K562 (cell line): ENCODE measurements at regions of chr11 and their contacts with region 1.

Region 1: DNA sequence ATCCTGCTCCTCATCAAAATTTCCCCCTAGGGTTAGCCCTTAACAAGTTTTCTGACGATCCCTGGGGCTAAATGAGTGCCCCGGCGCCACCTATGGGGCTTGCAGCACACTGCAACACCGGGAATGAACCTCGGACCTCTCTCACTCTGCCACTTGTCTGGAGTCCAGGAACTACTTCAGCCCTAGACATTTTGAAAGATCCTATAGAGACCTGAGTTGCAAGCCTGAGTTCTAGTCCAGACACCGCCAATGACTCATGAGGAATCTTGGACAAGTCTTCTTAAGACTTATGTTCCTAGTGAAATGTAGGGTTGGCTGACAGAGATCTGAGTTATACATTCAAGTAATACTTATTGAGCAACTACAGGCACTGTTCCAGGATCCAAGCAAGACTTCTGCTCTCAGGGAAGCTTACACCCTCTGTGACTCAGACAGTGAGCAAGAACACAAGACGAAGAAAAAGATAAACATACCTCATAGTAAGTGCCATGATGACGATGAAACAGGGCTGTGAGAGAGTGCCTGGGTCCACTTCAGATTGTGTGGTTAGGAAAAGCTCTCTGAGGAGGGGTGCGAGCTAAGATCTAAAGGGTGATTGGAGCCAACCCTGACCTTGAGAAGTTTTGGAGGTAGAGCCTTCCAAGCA is 10.2 kb upstream of the STK33 start:
- DNase-seq: peak; percentile 60 to 70 (median 68)
- ATAC-seq: peak; percentile 97
- H3K4me3 ChIP-seq: no peak overlapping the region
- H3K27ac ChIP-seq: no peak overlapping the region
- H3K4me1 ChIP-seq: peaks cover 0 to 3% of the 10 kb centered on the region in 2 experiments; a peak in 1 of 5 replicates
- H3K27me3 ChIP-seq: peaks cover 6 to 14% of the 10 kb centered on the region in 2 experiments
- CTCF ChIP-seq: peak; percentile 76 to 90 (median 81)
- EP300 ChIP-seq: no peak
- POLR2A ChIP-seq: no peak
- RAD21 ChIP-seq: peak; percentile 20 to 49; a peak in 3 of 4 replicates

Region 2: GRCh38 chr11:7281809-7282208 is 1322.4 kb before region 1 on chr11:
- CTCF ChIA-PET with region 1: no interaction called
- POLR2A ChIA-PET with region 1: no interaction called
- in situ Hi-C with region 1: no loop called
- intact Hi-C with region 1: no loop called
- DNase-seq: no peak
- ATAC-seq: no peak
- H3K4me3 ChIP-seq: no peak overlapping the region
- H3K27ac ChIP-seq: no peak overlapping the region
- H3K4me1 ChIP-seq: no peaks in the 10 kb centered on the region
- H3K27me3 ChIP-seq: no peaks in the 10 kb centered on the region
- CTCF ChIP-seq: no peak
- EP300 ChIP-seq: no peak
- POLR2A ChIP-seq: no peak
- RAD21 ChIP-seq: no peak

Region 3: DNA sequence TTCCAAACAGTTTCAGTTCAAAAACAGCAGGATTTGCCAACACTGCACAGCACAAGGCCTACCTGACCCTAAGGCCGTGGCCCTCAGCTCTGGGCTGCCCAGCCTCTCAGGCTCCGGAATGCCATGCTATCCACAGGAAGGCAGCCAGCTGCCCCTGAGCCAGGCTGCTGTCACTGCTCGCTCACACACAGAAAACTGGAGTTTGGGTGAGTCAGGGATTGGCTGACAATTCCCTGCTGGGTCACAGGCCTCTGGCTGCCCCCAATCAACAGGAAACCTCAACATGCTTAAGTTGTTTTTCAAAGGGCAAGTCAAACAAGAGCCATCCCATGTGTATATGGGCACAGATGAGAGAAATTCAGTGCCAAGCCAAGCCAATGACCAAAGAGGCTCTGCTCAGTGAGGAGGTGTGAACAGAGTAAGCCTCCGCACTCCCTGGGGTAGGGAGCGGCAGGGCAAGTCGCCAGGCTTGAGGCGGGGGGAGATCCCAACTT is 128.6 kb after region 1 on chr11:
- CTCF ChIA-PET with region 1: interaction called, 3 read pairs
- POLR2A ChIA-PET with region 1: no interaction called
- in situ Hi-C with region 1: no loop called
- intact Hi-C with region 1: loop called (anchors 10 kb)
- DNase-seq: no peak
- ATAC-seq: no peak
- H3K4me3 ChIP-seq: no peak overlapping the region
- H3K27ac ChIP-seq: no peak overlapping the region
- H3K4me1 ChIP-seq: peaks cover 7 to 10% of the 10 kb centered on the region in 2 experiments; a peak in 4 of 5 replicates
- H3K27me3 ChIP-seq: peaks cover 6 to 28% of the 10 kb centered on the region in 2 experiments; a peak in 4 of 5 replicates
- CTCF ChIP-seq: no peak
- EP300 ChIP-seq: no peak
- POLR2A ChIP-seq: no peak
- RAD21 ChIP-seq: no peak

Region 4: DNA sequence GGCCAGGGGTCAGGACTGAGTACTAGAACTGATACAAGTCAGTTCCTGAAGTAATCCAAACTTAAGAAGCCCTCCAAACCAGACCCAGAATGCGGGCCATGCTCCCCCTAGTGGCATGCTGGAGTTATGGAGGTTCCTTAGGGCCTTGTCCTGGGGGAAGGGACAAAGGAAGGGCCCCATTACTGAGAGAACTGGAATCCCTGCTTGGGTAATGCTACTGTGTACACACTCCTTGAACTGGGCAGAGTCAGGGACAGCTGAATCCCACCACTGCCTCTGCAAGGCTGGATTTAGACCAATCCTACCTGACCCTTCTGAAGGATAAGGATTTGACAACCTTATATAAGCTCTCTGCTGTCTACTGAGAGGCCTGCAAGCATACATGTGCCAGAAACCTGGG is 209.5 kb after region 1 on chr11:
- CTCF ChIA-PET with region 1: no interaction called
- POLR2A ChIA-PET with region 1: no interaction called
- in situ Hi-C with region 1: no loop called
- intact Hi-C with region 1: no loop called
- DNase-seq: peak; percentile 79 to 84 (median 80)
- ATAC-seq: peak; percentile 95
- H3K4me3 ChIP-seq: no peak overlapping the region
- H3K27ac ChIP-seq: no peak overlapping the region
- H3K4me1 ChIP-seq: peaks cover 0 to 5% of the 10 kb centered on the region in 2 experiments; a peak in 4 of 5 replicates
- H3K27me3 ChIP-seq: peaks cover 11 to 18% of the 10 kb centered on the region in 2 experiments
- CTCF ChIP-seq: peak; percentile 82 to 94 (median 82)
- EP300 ChIP-seq: no peak
- POLR2A ChIP-seq: no peak
- RAD21 ChIP-seq: peak; percentile 62 to 70